ENCODE measurements at regions of chr21 and their contacts with region 1.

Region 1: DNA sequence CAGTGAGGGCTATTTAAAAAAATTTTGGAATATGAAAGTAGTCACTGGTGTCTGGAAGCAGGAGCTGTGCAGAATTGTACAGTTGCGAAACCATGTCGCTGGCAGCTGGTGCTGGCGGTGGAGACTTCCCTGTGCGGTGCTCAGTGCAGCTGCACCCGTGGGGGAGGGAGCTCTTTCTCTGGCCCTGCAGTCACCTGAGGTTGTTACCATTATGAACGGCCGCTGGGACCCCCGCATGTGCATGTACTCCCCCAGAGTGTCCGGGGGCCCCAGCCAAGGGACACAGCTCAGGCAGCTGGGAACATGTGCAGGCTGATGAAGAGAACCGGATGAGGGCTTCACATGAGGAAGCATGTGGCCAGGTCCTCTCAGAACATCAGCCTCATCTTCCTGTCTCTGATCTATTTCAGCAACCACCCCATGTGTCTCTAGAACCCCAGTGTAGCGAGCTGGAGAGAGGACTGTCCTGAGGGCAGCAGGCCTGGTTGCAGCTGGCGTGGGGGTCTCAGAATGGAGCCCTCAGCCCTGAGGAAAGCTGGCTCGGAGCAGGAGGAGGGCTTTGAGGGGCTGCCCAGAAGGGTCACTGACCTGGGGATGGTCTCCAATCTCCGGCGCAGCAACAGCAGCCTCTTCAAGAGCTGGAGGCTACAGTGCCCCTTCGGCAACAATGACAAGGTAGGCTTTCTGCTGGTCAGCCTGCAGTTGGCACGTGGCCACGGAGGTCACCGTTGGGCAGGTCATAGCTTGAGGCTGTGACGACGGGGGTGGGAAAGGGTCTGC is at the start of gene TRPM2:
- DNase-seq: peak in 7 of 14 experiments; percentile 19 to 59 (median 47)
- ATAC-seq: peak; percentile 78
- H3K4me3 ChIP-seq: peak within 1 kb of the TSS; percentile 29
- H3K4me3 Mint-ChIP-seq: peak within 1 kb of the TSS; percentile 80
- H3K27ac ChIP-seq: peak within 1 kb of the TSS in 1 of 2 donors; percentile 48
- H3K27ac Mint-ChIP-seq: peak within 1 kb of the TSS; percentile 55
- H3K4me1 ChIP-seq: peaks cover 57% of the 10 kb centered on the region
- H3K4me1 Mint-ChIP-seq: peaks cover 44% of the 10 kb centered on the region
- H3K27me3 ChIP-seq: peaks cover 15% of the 10 kb centered on the region in 2 experiments
- H3K27me3 Mint-ChIP-seq: peaks cover 10% of the 10 kb centered on the region
- CTCF ChIP-seq: no peak
- total RNA-seq, gene TRPM2: 1.9 to 2.9 TPM

Region 2: DNA sequence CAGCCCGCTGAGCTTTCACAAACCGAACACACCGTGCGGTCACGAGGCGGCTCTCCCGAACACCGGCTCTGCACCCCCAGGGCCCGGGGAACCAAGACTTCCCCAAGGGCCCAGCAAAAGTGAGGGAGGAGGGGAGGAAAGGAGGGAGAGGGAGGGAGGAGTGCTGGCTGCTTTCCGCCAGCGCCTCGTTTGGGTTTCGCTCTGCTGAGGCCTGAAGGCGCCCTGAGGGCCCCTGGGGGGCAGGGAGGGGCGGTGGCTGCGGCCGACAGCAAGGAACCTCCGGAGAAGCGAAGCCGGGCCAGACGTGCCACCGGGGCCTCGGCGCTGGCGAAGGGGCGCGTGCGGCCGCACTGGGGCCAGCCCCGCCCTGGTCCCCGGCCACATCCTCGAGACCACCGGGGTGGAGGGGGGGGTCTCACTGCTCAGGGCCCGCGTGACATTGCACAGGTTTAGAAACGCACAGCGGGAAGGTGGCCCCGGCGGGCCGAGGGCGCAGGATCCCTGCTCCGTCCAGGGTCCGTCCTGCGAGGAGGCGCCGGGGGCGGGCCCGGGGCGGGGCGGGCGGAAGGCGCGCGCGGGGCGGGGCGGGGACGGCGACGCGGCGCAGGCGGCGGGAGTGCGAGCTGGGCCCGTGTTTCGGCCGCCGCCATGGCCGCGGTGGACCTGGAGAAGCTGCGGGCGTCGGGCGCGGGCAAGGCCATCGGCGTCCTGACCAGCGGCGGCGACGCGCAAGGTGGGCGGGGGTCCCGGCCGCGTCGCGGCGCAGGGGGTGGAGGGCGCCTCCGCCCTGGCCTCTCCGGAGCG is 53.7 kb before region 1 on chr21 and contains the start of gene PFKL:
- CTCF ChIA-PET with region 1: no interaction called
- POLR2A ChIA-PET with region 1: no interaction called
- intact Hi-C with region 1: loop called in 1 of 2 experiments (anchors 5 kb)
- DNase-seq: peak in 12 of 14 experiments; percentile 31 to 77 (median 52)
- ATAC-seq: peak; percentile 48
- H3K4me3 ChIP-seq: peak within 1 kb of the TSS; percentile 69
- H3K4me3 Mint-ChIP-seq: peak within 1 kb of the TSS; percentile 95
- H3K27ac ChIP-seq: peak within 1 kb of the TSS; percentile 52 to 67
- H3K27ac Mint-ChIP-seq: peak within 1 kb of the TSS; percentile 97
- H3K4me1 ChIP-seq: peaks cover 83% of the 10 kb centered on the region
- H3K4me1 Mint-ChIP-seq: peaks cover 51% of the 10 kb centered on the region
- H3K27me3 ChIP-seq: no peaks in the 10 kb centered on the region
- H3K27me3 Mint-ChIP-seq: no peaks in the 10 kb centered on the region
- CTCF ChIP-seq: no peak
- total RNA-seq, gene PFKL: 115 to 117 TPM

Region 3: DNA sequence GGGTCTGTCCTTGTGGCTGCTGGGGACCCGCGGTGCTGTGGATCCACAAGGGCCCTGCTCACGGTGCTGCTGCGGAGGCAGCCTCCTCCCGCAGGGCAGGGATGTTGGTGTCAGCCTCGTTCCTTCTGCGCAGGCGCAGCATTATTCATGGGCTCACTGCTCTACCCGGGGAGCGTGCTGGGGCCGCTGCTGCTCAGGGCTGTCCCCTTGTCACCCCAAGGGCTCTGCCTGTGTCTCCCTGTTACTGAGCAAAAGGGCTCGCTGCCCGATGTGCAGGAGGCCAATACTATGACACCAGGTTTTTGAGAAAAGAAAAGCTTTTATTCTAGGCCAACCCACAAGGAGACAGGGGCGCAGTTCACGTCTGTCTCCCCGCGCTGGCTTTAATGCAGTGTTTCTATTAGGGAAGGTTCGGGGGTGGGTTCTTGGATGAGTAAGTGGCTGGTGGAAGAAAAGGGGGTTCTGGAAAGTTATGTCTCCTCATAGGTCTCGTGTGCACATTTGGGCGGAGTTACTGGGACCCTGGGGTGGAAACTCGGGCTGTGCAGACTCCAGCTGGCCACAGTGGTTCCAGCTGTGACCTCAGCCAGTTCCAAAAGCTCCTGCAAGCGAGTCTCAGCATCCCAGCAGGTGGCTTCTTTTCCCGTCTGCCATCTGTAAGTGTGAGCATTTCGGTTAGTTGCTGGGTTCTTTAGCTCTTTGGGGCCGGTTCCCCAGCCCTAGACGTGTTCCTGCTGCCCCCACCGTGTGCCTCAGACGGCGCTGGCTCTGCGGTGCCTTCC is 61.1 kb after region 1 on chr21:
- CTCF ChIA-PET with region 1: no interaction called
- POLR2A ChIA-PET with region 1: no interaction called
- intact Hi-C with region 1: loop called in 1 of 2 experiments (anchors 10 kb)
- DNase-seq: peak in 1 of 14 experiments; percentile 10
- ATAC-seq: no peak
- H3K4me3 ChIP-seq: no peak overlapping the region
- H3K4me3 Mint-ChIP-seq: no peak overlapping the region
- H3K27ac ChIP-seq: no peak overlapping the region
- H3K27ac Mint-ChIP-seq: no peak overlapping the region
- H3K4me1 ChIP-seq: no peaks in the 10 kb centered on the region
- H3K4me1 Mint-ChIP-seq: no peaks in the 10 kb centered on the region
- H3K27me3 ChIP-seq: no peaks in the 10 kb centered on the region
- H3K27me3 Mint-ChIP-seq: no peaks in the 10 kb centered on the region
- CTCF ChIP-seq: no peak

Measured in CD4-positive, alpha-beta T cell (primary cell).